ENCODE measurements at regions of chr2 and their contacts with region 1.

Region 1: DNA sequence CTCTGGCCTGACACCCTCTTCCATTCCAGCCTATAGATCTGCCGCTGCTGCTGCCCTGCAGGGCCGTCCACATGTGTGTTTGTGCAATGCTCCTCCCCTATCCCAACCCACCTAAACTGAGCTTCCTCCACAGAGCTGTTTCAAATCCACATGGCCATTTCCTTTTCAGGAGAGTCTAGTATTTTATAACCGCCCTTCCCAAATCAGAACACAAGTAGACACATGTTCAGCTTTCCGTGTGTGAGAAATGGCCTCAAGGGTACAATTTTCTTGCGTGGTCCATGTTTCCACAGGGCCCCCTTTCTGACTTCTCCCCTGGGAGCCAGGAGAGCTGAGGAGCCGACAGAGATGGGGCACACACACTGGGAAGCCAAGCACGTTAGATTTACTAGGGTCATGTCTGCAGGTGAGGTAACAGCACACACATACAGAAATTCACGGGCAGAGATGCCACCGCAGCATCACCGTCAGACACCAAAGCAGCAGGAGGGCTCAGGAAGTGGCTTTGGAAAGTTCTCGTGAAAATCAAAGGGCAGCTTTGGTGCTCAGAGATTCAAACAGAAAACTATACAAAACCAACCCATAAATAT is 102.9 kb upstream of the TGFA start:
- DNase-seq: peak in 7 of 9 experiments; percentile 11 to 79 (median 57)
- ATAC-seq: peak; percentile 84
- H3K4me3 ChIP-seq: no peak overlapping the region
- H3K4me3 Mint-ChIP-seq: peak overlapping the region; percentile 10
- H3K27ac ChIP-seq: peak overlapping the region in 1 of 2 experiments; percentile 13
- H3K27ac Mint-ChIP-seq: peak overlapping the region; percentile 77
- H3K4me1 ChIP-seq: peaks cover 29% of the 10 kb centered on the region
- H3K4me1 Mint-ChIP-seq: peaks cover 37% of the 10 kb centered on the region
- H3K27me3 ChIP-seq: no peaks in the 10 kb centered on the region
- H3K27me3 Mint-ChIP-seq: peaks cover 13% of the 10 kb centered on the region
- CTCF ChIP-seq: no peak

Region 2: DNA sequence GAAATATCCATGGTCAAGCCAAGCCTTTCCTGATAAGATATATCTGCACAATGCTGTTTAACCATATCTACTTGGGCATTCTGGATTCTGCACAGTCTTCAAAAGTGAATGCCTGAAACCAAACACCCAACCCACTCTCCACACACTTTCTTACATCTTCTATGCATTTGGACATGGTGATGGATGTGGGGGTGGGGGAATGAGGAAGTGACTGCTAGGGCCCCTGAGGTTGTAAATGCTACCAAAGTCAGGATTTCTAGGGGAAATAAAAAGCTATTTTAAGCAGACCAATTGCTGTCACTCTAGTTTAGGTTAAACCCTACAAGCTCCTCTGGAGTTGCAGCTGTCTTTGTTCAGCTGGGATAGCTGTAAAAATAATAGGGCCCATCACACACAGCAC is 76.2 kb before region 1 on chr2:
- CTCF ChIA-PET with region 1: no interaction called
- POLR2A ChIA-PET with region 1: no interaction called
- intact Hi-C with region 1: no loop called
- DNase-seq: no peak
- ATAC-seq: no peak
- H3K4me3 ChIP-seq: no peak overlapping the region
- H3K4me3 Mint-ChIP-seq: no peak overlapping the region
- H3K27ac ChIP-seq: no peak overlapping the region
- H3K27ac Mint-ChIP-seq: no peak overlapping the region
- H3K4me1 ChIP-seq: no peaks in the 10 kb centered on the region
- H3K4me1 Mint-ChIP-seq: no peaks in the 10 kb centered on the region
- H3K27me3 ChIP-seq: peaks cover 0 to 2% of the 10 kb centered on the region in 2 experiments
- H3K27me3 Mint-ChIP-seq: peaks cover 21% of the 10 kb centered on the region
- CTCF ChIP-seq: no peak

Region 3: DNA sequence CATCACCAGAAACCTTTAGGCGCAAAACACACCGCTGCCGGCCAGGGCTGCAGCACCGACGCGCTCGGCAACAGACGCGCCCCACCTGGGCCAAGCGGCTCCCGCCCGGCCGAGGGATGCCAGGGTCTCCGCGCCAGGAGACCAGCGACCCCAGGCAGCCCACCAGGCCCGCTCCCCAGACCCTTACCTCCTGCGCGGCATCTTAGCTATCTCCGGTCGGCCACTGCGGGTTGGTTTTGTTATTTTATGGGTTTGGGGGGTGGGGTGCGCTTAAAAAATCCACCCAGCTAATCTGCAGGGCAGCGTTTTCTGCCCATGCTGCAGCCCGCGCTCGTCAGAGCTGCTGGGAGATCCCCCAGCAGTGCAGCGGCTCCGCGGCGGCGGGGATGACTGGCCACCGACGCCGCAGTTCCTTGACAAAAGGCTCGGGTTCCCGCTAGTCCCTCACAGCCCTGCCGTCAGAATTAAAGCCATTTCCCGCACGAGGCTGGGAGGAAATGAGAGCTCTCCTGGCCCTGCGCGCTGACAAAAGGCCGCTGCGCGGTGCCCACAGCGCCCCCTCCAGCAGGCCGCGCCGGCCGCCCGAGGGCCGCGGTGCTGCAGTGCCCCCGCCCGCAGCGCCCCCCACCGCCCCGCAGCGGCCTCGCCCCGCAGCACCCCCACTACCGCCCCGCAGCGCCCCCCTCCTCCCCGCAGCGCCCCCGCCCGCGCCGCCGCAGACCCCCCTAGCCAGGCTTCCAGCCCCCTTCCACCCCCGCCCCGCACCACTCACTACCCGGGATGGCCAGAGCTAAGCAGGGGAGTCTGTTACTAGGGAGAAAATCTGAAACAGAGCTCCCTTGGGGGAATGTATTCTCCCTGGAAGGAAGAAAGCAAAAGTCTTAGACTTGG is 111.4 kb after region 1 on chr2 and contains the start of gene ADD2:
- CTCF ChIA-PET with region 1: interaction called, 7 read pairs
- POLR2A ChIA-PET with region 1: no interaction called
- intact Hi-C with region 1: loop called in 1 of 2 experiments (anchors 5 kb)
- DNase-seq: peak in 8 of 9 experiments; percentile 8 to 70 (median 38)
- ATAC-seq: peak; percentile 66
- H3K4me3 ChIP-seq: peak within 1 kb of the TSS; percentile 52 to 63
- H3K4me3 Mint-ChIP-seq: peak within 1 kb of the TSS; percentile 84
- H3K27ac ChIP-seq: no peak within 1 kb of the TSS
- H3K27ac Mint-ChIP-seq: peak within 1 kb of the TSS; percentile 77
- H3K4me1 ChIP-seq: peaks cover 9% of the 10 kb centered on the region
- H3K4me1 Mint-ChIP-seq: peaks cover 14% of the 10 kb centered on the region
- H3K27me3 ChIP-seq: peaks cover 0 to 17% of the 10 kb centered on the region in 2 experiments
- H3K27me3 Mint-ChIP-seq: peaks cover 32% of the 10 kb centered on the region
- CTCF ChIP-seq: no peak
- total RNA-seq, gene ADD2: 2.5 to 3.0 TPM

Region 4: GRCh38 chr2:70789304-70790135 is 133.0 kb after region 1 on chr2:
- CTCF ChIA-PET with region 1: interaction called, 66 read pairs
- POLR2A ChIA-PET with region 1: no interaction called
- intact Hi-C with region 1: loop called (anchors 1 to 2 kb)
- DNase-seq: peak; percentile 30 to 78 (median 67)
- ATAC-seq: peak; percentile 73
- H3K4me3 ChIP-seq: peak overlapping the region; percentile 32 to 36
- H3K4me3 Mint-ChIP-seq: peak overlapping the region; percentile 82
- H3K27ac ChIP-seq: no peak overlapping the region
- H3K27ac Mint-ChIP-seq: no peak overlapping the region
- H3K4me1 ChIP-seq: peaks cover 8% of the 10 kb centered on the region
- H3K4me1 Mint-ChIP-seq: peaks cover 13% of the 10 kb centered on the region
- H3K27me3 ChIP-seq: peaks cover 7 to 11% of the 10 kb centered on the region in 2 experiments
- H3K27me3 Mint-ChIP-seq: peaks cover 51% of the 10 kb centered on the region
- CTCF ChIP-seq: peak; percentile 54

Region 5: GRCh38 chr2:70806013-70806412 is 149.5 kb after region 1 on chr2:
- CTCF ChIA-PET with region 1: no interaction called
- POLR2A ChIA-PET with region 1: no interaction called
- intact Hi-C with region 1: no loop called
- DNase-seq: no peak
- ATAC-seq: no peak
- H3K4me3 ChIP-seq: no peak overlapping the region
- H3K4me3 Mint-ChIP-seq: no peak overlapping the region
- H3K27ac ChIP-seq: no peak overlapping the region
- H3K27ac Mint-ChIP-seq: no peak overlapping the region
- H3K4me1 ChIP-seq: no peaks in the 10 kb centered on the region
- H3K4me1 Mint-ChIP-seq: no peaks in the 10 kb centered on the region
- H3K27me3 ChIP-seq: no peaks in the 10 kb centered on the region
- H3K27me3 Mint-ChIP-seq: peaks cover 2% of the 10 kb centered on the region
- CTCF ChIP-seq: no peak